PC-3 (cell line): ENCODE measurements at regions of chr19 and their contacts with region 1.

Region 1: GRCh38 chr19:21109116-21109515 is 27.1 kb downstream of the ZNF714 start:
- DNase-seq: no peak
- ATAC-seq: no peak
- H3K4me3 ChIP-seq: no peak overlapping the region
- H3K27ac ChIP-seq: no peak overlapping the region
- H3K4me1 ChIP-seq: no peaks in the 10 kb centered on the region
- H3K27me3 ChIP-seq: no peaks in the 10 kb centered on the region
- CTCF ChIP-seq: no peak

Region 2: DNA sequence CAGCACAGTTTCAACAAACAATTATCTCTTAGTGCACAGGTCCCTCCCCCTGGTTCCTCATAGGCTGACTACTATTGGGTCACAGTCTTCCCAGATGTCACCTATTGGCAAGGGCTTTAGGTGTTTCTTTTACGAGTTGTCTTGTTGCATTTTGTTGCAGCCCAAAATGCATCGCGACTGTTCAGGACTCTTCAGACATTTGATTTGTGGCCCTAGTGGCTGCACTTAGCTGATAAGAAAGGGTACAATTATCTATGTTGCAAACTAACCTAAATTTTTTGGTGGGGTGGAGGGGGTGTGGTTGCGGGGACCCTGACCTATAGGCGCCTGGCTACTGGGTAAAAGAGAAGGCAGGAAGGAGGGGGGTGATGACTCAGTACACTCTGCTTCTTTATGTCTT is 56.2 kb before region 1 on chr19:
- CTCF ChIA-PET with region 1: no interaction called
- POLR2A ChIA-PET with region 1: interaction called, 17 read pairs
- intact Hi-C with region 1: no loop called
- DNase-seq: no peak
- ATAC-seq: no peak
- H3K4me3 ChIP-seq: no peak overlapping the region
- H3K27ac ChIP-seq: no peak overlapping the region
- H3K4me1 ChIP-seq: no peaks in the 10 kb centered on the region
- H3K27me3 ChIP-seq: no peaks in the 10 kb centered on the region
- CTCF ChIP-seq: no peak